GM12878 (cell line): ENCODE measurements at regions of chr7 and their contacts with region 1.

Region 1: DNA sequence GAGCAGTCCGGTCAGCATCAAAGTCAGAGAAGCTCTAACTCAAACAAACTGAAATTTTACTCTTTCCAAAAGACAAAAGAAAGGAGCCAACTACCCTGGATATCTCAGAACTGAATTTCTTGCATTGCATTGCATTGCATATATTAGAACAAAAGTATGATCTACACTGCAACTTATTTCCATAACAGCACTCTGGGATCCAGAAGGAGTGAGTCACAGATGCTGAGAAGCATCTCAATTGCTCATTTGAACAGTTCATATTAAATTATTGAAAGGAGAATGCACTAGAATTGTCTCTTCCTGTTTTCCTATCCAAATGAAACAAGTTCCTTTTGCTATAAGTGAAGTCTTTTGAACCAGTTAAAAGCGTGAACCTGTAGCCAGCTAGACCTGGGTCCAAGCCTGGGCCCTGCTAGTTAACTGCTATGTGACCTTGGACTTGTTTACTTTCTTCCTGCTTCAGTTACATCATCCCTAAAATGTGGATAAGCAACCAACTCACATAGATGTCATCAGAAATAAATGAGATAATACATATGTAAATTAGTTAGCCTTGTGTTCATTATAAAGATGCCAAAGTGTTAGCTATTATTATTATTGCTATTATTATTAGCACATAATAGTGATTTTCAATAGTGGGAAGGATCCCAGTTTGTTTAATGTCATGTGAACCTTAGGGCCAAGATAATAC is 184.1 kb downstream of the CREB5 start:
- DNase-seq: no peak
- ATAC-seq: no peak
- H3K4me3 ChIP-seq: no peak overlapping the region
- H3K27ac ChIP-seq: no peak overlapping the region
- H3K4me1 ChIP-seq: no peaks in the 10 kb centered on the region
- H3K27me3 ChIP-seq: no peaks in the 10 kb centered on the region
- CTCF ChIP-seq: no peak
- EP300 ChIP-seq: no peak
- POLR2A ChIP-seq: no peak
- RAD21 ChIP-seq: no peak

Region 2: DNA sequence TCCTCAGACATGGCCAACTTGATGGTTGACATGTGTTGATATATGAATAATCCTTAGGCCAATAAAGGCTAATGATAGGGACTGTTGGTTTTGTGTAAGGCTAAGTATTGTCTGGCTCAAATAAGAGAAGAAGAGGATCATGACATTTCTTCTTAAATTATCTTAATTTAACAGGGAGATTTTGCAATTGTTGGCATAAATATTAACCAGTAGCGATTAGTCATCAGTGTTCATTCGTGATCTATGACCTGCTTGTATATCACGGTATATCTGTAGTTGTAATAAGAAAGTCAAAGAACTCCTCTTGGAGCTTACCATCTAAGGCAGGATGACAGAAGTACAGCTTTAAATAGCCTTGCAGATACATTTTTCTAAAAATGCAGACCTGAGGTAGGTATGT is 12.3 kb after region 1 on chr7:
- CTCF ChIA-PET with region 1: interaction called, 3 read pairs
- POLR2A ChIA-PET with region 1: interaction called, 12 read pairs
- RAD21 ChIA-PET with region 1: interaction called, 8 read pairs
- SMC1A ChIA-PET with region 1: interaction called, 11 read pairs
- in situ Hi-C with region 1: no loop called
- intact Hi-C with region 1: no loop called
- DNase-seq: no peak
- ATAC-seq: no peak
- H3K4me3 ChIP-seq: no peak overlapping the region
- H3K27ac ChIP-seq: no peak overlapping the region
- H3K4me1 ChIP-seq: no peaks in the 10 kb centered on the region; the same call in 1 of the 2 replicates
- H3K27me3 ChIP-seq: no peaks in the 10 kb centered on the region; a peak in 1 of 4 replicates
- CTCF ChIP-seq: no peak
- EP300 ChIP-seq: no peak
- POLR2A ChIP-seq: no peak
- RAD21 ChIP-seq: no peak

Region 3: DNA sequence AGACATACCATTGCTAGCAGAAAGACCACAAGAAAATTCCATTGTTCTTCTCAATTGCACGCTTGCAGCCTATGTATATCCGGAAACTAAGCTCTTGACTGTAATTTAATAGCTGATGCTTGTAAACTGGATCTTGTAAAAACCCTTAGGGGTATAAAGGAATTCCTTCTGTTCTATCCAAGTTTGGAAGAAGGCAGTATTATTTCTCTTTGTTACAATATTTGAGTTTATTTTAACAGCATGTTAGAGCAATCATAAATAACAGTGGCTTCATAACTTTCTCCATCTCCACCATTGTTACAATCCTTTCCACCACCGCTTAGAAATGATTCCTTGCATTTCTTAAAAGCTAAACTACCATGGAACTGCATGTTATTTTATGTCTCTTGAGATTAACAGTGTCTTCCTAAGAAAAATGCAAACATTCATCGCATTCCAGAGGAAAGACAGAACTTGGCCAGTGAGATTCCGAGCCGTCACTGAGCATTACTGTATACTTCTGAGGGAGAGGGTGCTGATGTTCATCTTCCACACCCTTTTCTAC is 269.3 kb after region 1 on chr7:
- CTCF ChIA-PET with region 1: no interaction called
- POLR2A ChIA-PET with region 1: no interaction called
- RAD21 ChIA-PET with region 1: no interaction called
- SMC1A ChIA-PET with region 1: no interaction called
- in situ Hi-C with region 1: no loop called
- intact Hi-C with region 1: no loop called
- DNase-seq: no peak
- ATAC-seq: no peak
- H3K4me3 ChIP-seq: no peak overlapping the region
- H3K27ac ChIP-seq: no peak overlapping the region
- H3K4me1 ChIP-seq: no peaks in the 10 kb centered on the region
- H3K27me3 ChIP-seq: peaks cover 3 to 10% of the 10 kb centered on the region in 2 experiments
- CTCF ChIP-seq: no peak
- EP300 ChIP-seq: no peak
- POLR2A ChIP-seq: no peak
- RAD21 ChIP-seq: no peak